Activated T-helper 1 cell treated with anti-CD3 and anti-CD28 coated beads, Interleukin-12 subunit alpha, Interleukin-12 subunit beta, Interleukin-2, Interleukin-4 antibody, amounts not matched to agents 30 ng/mL and 10 ng/mL and 1 ng/mL, durations not matched to agents 14 hours and 24 hours and 36 hours (primary cell): ENCODE measurements at regions of chr1 and their contacts with region 1.

Region 1: GRCh38 chr1:205775015-205775716 is at the start of gene RAB29:
- DNase-seq: peak; percentile 82
- H3K4me3 Mint-ChIP-seq: peak within 1 kb of the TSS; percentile 88
- H3K27ac Mint-ChIP-seq: peak within 1 kb of the TSS; percentile 93
- H3K4me1 Mint-ChIP-seq: peaks cover 59% of the 10 kb centered on the region
- H3K27me3 Mint-ChIP-seq: no peaks in the 10 kb centered on the region
- total RNA-seq, gene RAB29: 37.2 and 38.1 TPM in 2 replicates

Region 2: GRCh38 chr1:205693421-205693991 is 81.7 kb before region 1 on chr1:
- intact Hi-C with region 1: no loop called
- DNase-seq: no peak
- H3K4me3 Mint-ChIP-seq: no peak overlapping the region
- H3K27ac Mint-ChIP-seq: no peak overlapping the region
- H3K4me1 Mint-ChIP-seq: peaks cover 7% of the 10 kb centered on the region
- H3K27me3 Mint-ChIP-seq: peaks cover 17% of the 10 kb centered on the region

Region 3: DNA sequence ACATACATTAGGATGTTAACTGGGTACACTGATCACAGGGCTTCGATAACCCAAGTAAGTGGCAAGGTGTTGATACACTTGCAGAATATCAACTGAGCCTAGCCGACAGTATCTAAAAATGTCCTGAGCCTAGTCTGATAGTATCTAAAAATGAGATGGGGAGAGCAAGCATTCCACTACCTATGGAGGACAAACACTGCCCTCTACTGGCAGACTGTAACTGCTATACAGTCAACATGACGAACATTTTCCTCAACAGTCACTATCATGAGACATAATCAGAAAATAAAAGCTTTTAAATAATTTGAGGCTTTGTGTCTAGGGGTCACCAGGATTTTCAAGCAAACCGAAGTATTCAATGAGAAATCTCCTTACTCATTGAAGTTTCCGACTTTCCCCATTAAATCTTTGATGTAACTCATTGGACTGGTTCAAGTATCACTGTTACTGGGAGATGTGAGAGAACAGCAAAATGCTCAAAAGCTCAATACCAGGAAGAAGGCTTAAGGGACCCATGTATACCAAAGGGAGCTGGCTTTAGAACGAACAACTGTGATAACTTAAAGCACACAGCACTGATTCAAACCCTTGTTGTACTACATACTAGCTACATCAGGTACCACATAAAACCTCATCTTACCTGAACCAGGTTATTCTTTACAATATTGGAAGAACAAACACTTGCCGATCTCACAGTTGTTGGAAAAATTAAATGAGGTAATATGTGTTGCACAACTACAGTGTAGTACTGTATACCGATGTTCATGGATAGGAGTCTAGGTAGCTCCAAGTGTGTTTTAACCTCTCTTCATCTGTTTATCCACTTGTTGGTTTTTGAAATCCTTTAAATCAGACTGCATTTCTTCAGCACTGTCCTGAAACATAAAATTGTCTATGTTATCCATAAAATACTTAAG is 63.8 kb before region 1 on chr1:
- intact Hi-C with region 1: loop called (anchors 2 kb)
- DNase-seq: peak; percentile 42
- H3K4me3 Mint-ChIP-seq: no peak overlapping the region
- H3K27ac Mint-ChIP-seq: peak overlapping the region; percentile 56
- H3K4me1 Mint-ChIP-seq: peaks cover 16% of the 10 kb centered on the region
- H3K27me3 Mint-ChIP-seq: no peaks in the 10 kb centered on the region

Region 4: GRCh38 chr1:205719762-205720161 is 55.4 kb before region 1 on chr1:
- intact Hi-C with region 1: loop called (anchors 1 kb)
- DNase-seq: no peak
- H3K4me3 Mint-ChIP-seq: peak overlapping the region; percentile 20
- H3K27ac Mint-ChIP-seq: peak overlapping the region; percentile 70
- H3K4me1 Mint-ChIP-seq: peaks cover 37% of the 10 kb centered on the region
- H3K27me3 Mint-ChIP-seq: no peaks in the 10 kb centered on the region

Region 5: GRCh38 chr1:205812878-205813754 is 38.0 kb after region 1 on chr1 and contains the start of gene SLC41A1:
- intact Hi-C with region 1: loop called (anchors 1 kb)
- DNase-seq: peak; percentile 81
- H3K4me3 Mint-ChIP-seq: peak within 1 kb of the TSS; percentile 94
- H3K27ac Mint-ChIP-seq: peak within 1 kb of the TSS; percentile 85
- H3K4me1 Mint-ChIP-seq: peaks cover 49% of the 10 kb centered on the region
- H3K27me3 Mint-ChIP-seq: peaks cover 7% of the 10 kb centered on the region
- total RNA-seq, gene SLC41A1: 33.9 and 34.8 TPM in 2 replicates

Region 6: DNA sequence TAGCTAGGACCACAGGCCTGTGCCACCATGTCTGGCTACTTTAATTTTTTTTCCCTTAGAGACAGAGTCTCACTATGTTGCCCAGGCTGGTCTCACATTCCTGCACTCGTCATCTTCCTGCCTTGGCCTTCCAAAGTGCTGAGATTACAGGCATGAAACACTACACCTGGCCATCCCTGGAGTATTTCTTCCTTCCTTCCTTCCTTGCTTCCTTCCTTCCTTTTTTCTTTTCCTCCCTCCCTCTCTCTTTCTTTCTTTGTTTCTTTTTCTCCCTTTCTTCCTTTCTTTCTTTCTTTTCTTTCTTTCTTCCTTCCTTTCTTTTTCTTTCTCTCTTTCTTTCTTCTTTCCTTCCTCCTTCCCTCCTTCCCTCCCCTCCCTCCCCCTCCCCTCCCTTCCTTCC is 121.2 kb after region 1 on chr1:
- intact Hi-C with region 1: no loop called
- DNase-seq: no peak
- H3K4me3 Mint-ChIP-seq: no peak overlapping the region
- H3K27ac Mint-ChIP-seq: no peak overlapping the region
- H3K4me1 Mint-ChIP-seq: no peaks in the 10 kb centered on the region
- H3K27me3 Mint-ChIP-seq: peaks cover 29% of the 10 kb centered on the region